B cell (primary cell): ENCODE measurements at regions of chr2 and their contacts with region 1.

Region 1: DNA sequence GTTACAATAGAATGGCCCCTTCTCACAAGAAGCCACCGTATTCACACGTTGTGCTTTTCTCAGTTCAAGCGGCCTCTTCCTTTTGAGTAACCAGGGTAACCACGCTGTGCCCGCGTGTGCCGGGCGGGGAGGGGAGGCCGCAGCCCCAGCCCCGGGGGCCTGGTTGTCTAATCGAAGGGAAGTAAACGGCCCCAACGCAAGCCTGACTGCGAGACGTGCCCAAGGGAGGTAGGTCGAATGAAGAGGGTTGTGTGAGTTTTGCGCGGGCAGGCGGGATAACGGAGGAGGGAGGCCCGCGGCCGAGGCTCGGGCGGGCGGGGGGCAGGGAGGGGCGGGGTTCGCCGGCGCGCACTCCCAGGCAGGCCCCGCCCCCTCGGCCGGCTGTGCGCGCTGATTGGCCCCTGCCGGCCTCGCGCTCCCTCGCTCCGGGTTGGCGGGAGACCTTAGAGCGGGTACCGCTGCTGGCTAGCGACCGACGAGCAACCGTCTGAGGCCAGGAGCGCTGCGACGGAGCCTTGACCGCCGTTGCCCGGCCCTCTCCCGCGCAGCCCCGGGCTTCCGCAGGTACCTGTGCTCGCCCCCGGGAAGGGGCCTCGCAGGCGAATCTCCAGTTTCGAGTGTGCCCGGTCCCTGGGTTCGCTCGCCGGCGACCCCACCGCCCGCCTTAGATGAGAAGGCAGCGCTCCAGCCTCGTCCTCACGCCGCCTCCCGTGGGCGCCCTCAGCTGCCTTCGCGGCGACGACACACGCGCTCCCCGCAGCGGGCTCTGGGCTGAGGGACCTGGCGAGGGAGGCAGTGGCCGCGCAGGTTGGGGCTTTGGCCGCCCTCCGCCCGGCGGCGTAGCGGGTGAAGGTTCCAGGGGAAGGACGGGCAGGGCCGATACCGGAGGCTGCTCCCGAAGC is at the start of gene SPDYA:
- DNase-seq: peak; percentile 81
- ATAC-seq: peak; percentile 95
- H3K4me3 ChIP-seq: peak within 1 kb of the TSS in 4 of 5 experiments; percentile 43 to 75 (median 56)
- H3K4me3 Mint-ChIP-seq: peak within 1 kb of the TSS; percentile 86
- H3K27ac ChIP-seq: no peak within 1 kb of the TSS
- H3K27ac Mint-ChIP-seq: peak within 1 kb of the TSS; percentile 65
- H3K4me1 ChIP-seq: peaks cover 12 to 16% of the 10 kb centered on the region in 2 donors
- H3K4me1 Mint-ChIP-seq: peaks cover 14% of the 10 kb centered on the region
- H3K27me3 ChIP-seq: peaks cover 0 to 7% (median 0%) of the 10 kb centered on the region in 4 experiments
- H3K27me3 Mint-ChIP-seq: no peaks in the 10 kb centered on the region
- CTCF ChIP-seq: no peak
- total RNA-seq, gene SPDYA: 2.8 and 3.5 TPM in 2 replicates

Region 2: GRCh38 chr2:28413142-28413898 is 397.3 kb before region 1 on chr2:
- CTCF ChIA-PET with region 1: no interaction called
- POLR2A ChIA-PET with region 1: no interaction called
- intact Hi-C with region 1: no loop called
- DNase-seq: no peak
- ATAC-seq: no peak
- H3K4me3 ChIP-seq: no peak overlapping the region
- H3K4me3 Mint-ChIP-seq: no peak overlapping the region
- H3K27ac ChIP-seq: no peak overlapping the region
- H3K27ac Mint-ChIP-seq: no peak overlapping the region
- H3K4me1 ChIP-seq: peaks cover 0 to 8% of the 10 kb centered on the region in 2 donors
- H3K4me1 Mint-ChIP-seq: peaks cover 17% of the 10 kb centered on the region
- H3K27me3 ChIP-seq: no peaks in the 10 kb centered on the region
- H3K27me3 Mint-ChIP-seq: no peaks in the 10 kb centered on the region
- CTCF ChIP-seq: no peak

Region 3: GRCh38 chr2:28566521-28567041 is 244.1 kb before region 1 on chr2:
- CTCF ChIA-PET with region 1: no interaction called
- POLR2A ChIA-PET with region 1: no interaction called
- intact Hi-C with region 1: loop called (anchors 2 kb)
- DNase-seq: peak; percentile 91
- ATAC-seq: peak; percentile 99
- H3K4me3 ChIP-seq: peak overlapping the region; percentile 36 to 90 (median 70)
- H3K4me3 Mint-ChIP-seq: peak overlapping the region; percentile 95
- H3K27ac ChIP-seq: no peak overlapping the region
- H3K27ac Mint-ChIP-seq: peak overlapping the region; percentile 72
- H3K4me1 ChIP-seq: peaks cover 5 to 11% of the 10 kb centered on the region in 2 donors
- H3K4me1 Mint-ChIP-seq: peaks cover 11% of the 10 kb centered on the region
- H3K27me3 ChIP-seq: peaks cover 0 to 5% (median 2%) of the 10 kb centered on the region in 4 experiments
- H3K27me3 Mint-ChIP-seq: peaks cover 14% of the 10 kb centered on the region
- CTCF ChIP-seq: peak; percentile 100

Region 4: DNA sequence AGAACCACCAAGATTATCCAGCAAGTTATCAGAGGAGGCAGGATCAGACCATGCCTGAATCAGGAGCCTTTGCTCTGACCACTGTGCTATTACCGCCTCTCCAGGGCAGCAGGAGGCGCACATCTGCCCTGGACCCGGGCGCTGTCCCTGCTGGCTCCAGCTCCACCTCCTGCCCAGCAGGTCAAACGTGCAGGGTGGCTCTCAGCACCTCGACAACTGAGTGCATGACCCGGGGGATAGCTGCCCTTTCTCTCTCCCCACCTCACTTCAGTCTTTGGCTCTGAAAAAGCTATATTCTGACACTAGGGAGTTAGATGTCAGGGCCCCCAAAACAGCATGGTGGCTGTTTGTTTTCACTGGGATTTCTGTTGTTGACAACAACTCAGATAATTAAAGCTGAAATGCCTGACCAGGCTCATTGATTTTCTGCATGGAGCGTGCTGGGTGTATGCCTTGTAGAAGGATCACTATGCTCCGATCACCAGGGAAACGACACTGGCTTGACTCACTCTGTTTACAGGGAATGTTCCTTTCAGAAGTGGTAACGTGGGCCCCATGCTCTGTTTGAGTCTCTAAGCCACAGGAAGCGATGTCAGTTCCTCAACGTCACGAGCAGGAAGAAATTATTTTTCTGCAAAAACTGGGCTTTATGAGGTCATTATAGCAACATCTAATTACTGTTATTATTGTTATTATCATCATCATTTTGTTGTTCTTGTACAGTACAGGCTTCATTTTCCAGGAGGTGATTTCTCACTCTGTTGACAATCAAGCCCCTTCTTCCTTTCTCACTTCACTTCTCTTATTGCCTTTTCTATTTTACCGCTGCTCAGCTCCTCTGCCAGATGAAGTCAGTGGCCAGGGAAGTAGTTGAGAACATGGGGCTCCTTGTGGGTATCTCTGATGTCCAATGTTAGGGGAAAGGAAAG is 189.2 kb before region 1 on chr2:
- CTCF ChIA-PET with region 1: no interaction called
- POLR2A ChIA-PET with region 1: no interaction called
- intact Hi-C with region 1: no loop called
- DNase-seq: peak; percentile 71
- ATAC-seq: peak; percentile 62
- H3K4me3 ChIP-seq: peak overlapping the region in 2 of 5 experiments; percentile 11 to 36
- H3K4me3 Mint-ChIP-seq: peak overlapping the region; percentile 73
- H3K27ac ChIP-seq: peak overlapping the region; percentile 27 to 31
- H3K27ac Mint-ChIP-seq: peak overlapping the region; percentile 90
- H3K4me1 ChIP-seq: peaks cover 31 to 39% of the 10 kb centered on the region in 2 donors
- H3K4me1 Mint-ChIP-seq: peaks cover 47% of the 10 kb centered on the region
- H3K27me3 ChIP-seq: peaks cover 0 to 4% (median 0%) of the 10 kb centered on the region in 4 experiments
- H3K27me3 Mint-ChIP-seq: peaks cover 4% of the 10 kb centered on the region
- CTCF ChIP-seq: no peak

Region 5: DNA sequence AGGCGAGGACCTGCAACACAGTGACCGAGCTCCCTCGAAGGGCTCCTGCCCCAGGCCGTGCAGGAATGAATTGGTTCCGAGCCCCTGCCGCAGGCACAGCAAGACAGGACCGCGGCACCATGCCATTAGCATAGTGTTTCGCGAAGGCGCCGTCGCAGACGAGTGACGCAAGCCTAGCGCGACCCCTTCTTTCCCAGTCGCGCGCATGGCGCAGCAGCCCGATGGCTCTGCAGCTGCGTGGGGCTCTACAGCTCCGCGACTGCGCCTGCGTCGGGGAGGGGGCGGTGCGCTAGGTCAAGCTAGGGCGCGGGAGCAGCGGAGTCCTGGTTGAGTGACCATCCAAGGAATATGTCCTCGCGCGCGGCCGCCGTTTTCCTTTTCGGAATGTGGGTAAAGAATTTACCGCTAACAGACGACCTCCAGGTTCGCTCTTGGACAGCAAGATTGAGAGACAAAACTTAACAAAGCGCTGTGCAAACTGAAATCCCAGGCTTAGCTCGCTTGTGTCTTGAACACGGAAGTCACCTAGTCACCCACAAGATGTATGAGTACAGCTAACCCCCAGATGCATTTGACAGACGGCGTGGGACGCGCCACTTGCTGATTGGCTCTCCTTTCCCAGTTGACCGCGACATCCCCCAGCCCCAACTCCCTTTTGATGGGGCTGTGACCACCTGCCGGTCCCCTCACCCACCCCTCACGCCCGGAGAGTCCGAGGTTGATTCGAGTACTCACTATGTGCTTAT is 59.7 kb after region 1 on chr2 and contains the start of gene TRMT61B:
- CTCF ChIA-PET with region 1: no interaction called
- POLR2A ChIA-PET with region 1: no interaction called
- intact Hi-C with region 1: loop called (anchors 5 kb)
- DNase-seq: peak; percentile 98
- ATAC-seq: peak; percentile 96
- H3K4me3 ChIP-seq: peak within 1 kb of the TSS; percentile 71 to 92 (median 90)
- H3K4me3 Mint-ChIP-seq: peak within 1 kb of the TSS; percentile 99
- H3K27ac ChIP-seq: peak within 1 kb of the TSS; percentile 85 to 94
- H3K27ac Mint-ChIP-seq: peak within 1 kb of the TSS; percentile 100
- H3K4me1 ChIP-seq: peaks cover 20 to 23% of the 10 kb centered on the region in 2 donors
- H3K4me1 Mint-ChIP-seq: peaks cover 29% of the 10 kb centered on the region
- H3K27me3 ChIP-seq: peaks cover 0 to 6% (median 0%) of the 10 kb centered on the region in 4 experiments
- H3K27me3 Mint-ChIP-seq: peaks cover 2% of the 10 kb centered on the region
- CTCF ChIP-seq: no peak
- total RNA-seq, gene TRMT61B: 20.3 and 23.0 TPM in 2 replicates

Region 6: GRCh38 chr2:28952816-28953211 is 142.2 kb after region 1 on chr2:
- CTCF ChIA-PET with region 1: no interaction called
- POLR2A ChIA-PET with region 1: no interaction called
- intact Hi-C with region 1: no loop called
- DNase-seq: no peak
- ATAC-seq: no peak
- H3K4me3 ChIP-seq: no peak overlapping the region
- H3K4me3 Mint-ChIP-seq: no peak overlapping the region
- H3K27ac ChIP-seq: no peak overlapping the region
- H3K27ac Mint-ChIP-seq: no peak overlapping the region
- H3K4me1 ChIP-seq: no peaks in the 10 kb centered on the region
- H3K4me1 Mint-ChIP-seq: peaks cover 6% of the 10 kb centered on the region
- H3K27me3 ChIP-seq: no peaks in the 10 kb centered on the region
- H3K27me3 Mint-ChIP-seq: no peaks in the 10 kb centered on the region
- CTCF ChIP-seq: no peak